ENCODE measurements at regions of chr1 and their contacts with region 1.

Region 1: DNA sequence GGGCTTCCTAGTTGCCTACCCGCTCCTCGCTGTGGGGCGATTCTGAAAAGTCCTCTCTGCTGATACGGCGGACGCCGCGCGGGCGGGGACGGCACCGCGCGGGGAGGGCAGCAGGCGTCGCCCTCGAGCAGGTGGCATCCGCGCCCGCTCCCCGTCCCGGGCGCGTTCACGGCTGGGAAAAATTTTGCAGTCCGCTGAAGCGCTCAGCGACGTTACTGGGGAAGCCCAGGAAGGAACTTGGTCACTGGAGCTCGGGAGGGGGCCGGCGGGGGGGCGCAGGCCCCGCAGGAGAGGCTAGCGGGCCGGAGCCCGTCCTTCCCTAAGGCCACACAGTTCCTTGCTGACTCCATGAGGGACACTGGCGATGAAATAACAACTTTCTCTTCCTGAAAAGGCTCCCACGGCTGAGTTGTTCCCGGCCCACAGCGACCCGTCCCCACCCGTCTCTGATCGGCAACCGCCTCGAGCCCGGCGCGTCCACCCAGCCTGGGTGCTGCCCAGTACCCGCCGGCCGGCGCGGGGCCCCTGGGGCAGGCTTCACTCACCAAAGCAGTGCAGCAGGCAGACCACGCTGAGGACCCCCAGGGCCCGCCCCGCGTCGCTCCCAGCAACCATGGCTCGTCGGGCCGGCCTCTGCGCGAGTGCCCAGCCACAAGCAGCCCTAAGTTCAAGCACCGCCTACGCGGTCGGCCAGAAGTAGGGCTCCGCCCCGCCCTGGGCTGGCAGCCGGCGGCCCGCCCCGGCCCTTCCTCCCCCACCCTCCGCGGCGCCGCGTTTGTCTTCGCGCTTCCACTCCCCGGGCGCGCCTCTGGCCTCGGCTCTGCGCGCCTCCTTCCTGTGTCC is at the start of gene CD58:
- DNase-seq: peak; percentile 86
- H3K4me3 Mint-ChIP-seq: peak within 1 kb of the TSS; percentile 69
- H3K27ac Mint-ChIP-seq: peak within 1 kb of the TSS; percentile 91
- H3K4me1 Mint-ChIP-seq: peaks cover 30% of the 10 kb centered on the region
- H3K27me3 Mint-ChIP-seq: no peaks in the 10 kb centered on the region
- CTCF ChIP-seq: peak; percentile 74
- total RNA-seq, gene CD58: 11.0 and 13.4 TPM in 2 replicates

Region 2: GRCh38 chr1:116133696-116134650 is 436.6 kb before region 1 on chr1:
- CTCF ChIA-PET with region 1: interaction called, 6 read pairs
- POLR2A ChIA-PET with region 1: no interaction called
- intact Hi-C with region 1: loop called (anchors 10 kb)
- DNase-seq: no peak
- H3K4me3 Mint-ChIP-seq: no peak overlapping the region
- H3K27ac Mint-ChIP-seq: no peak overlapping the region
- H3K4me1 Mint-ChIP-seq: no peaks in the 10 kb centered on the region
- H3K27me3 Mint-ChIP-seq: no peaks in the 10 kb centered on the region
- CTCF ChIP-seq: no peak

Region 3: GRCh38 chr1:116504308-116505156 is 66.0 kb before region 1 on chr1:
- CTCF ChIA-PET with region 1: interaction called, 4 read pairs
- POLR2A ChIA-PET with region 1: interaction called, 3 read pairs
- intact Hi-C with region 1: loop called (anchors 2 kb)
- DNase-seq: peak; percentile 62
- H3K4me3 Mint-ChIP-seq: no peak overlapping the region
- H3K27ac Mint-ChIP-seq: peak overlapping the region; percentile 73
- H3K4me1 Mint-ChIP-seq: peaks cover 27% of the 10 kb centered on the region
- H3K27me3 Mint-ChIP-seq: no peaks in the 10 kb centered on the region
- CTCF ChIP-seq: no peak

Region 4: DNA sequence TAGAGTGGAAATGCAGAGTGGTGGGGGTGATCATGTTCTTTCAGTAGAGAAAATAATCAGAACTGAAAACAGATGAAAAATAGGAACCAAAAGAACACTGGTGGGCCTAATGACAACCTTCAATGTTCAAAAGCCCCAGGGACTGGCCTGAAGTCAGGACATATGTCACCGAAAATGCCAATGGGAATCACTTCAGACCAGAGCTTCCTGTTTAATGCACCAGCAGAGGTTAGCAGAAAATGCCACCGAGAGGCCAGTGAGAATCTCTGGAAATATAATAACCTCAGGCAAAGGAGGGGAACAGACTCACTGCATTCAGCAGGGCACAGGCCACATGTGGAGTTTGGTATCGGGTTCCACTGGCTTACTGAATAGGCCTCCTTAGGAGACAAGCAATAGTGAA is 16.2 kb after region 1 on chr1:
- CTCF ChIA-PET with region 1: interaction called, 13 read pairs
- POLR2A ChIA-PET with region 1: no interaction called
- intact Hi-C with region 1: no loop called
- DNase-seq: no peak
- H3K4me3 Mint-ChIP-seq: no peak overlapping the region
- H3K27ac Mint-ChIP-seq: no peak overlapping the region
- H3K4me1 Mint-ChIP-seq: peaks cover 9% of the 10 kb centered on the region
- H3K27me3 Mint-ChIP-seq: no peaks in the 10 kb centered on the region
- CTCF ChIP-seq: no peak

Region 5: GRCh38 chr1:116737020-116737854 is 166.7 kb after region 1 on chr1:
- CTCF ChIA-PET with region 1: interaction called, 14 read pairs
- POLR2A ChIA-PET with region 1: no interaction called
- intact Hi-C with region 1: loop called (anchors 5 kb)
- DNase-seq: peak; percentile 60
- H3K4me3 Mint-ChIP-seq: no peak overlapping the region
- H3K27ac Mint-ChIP-seq: no peak overlapping the region
- H3K4me1 Mint-ChIP-seq: no peaks in the 10 kb centered on the region
- H3K27me3 Mint-ChIP-seq: peaks cover 11% of the 10 kb centered on the region
- CTCF ChIP-seq: peak; percentile 87

Region 6: DNA sequence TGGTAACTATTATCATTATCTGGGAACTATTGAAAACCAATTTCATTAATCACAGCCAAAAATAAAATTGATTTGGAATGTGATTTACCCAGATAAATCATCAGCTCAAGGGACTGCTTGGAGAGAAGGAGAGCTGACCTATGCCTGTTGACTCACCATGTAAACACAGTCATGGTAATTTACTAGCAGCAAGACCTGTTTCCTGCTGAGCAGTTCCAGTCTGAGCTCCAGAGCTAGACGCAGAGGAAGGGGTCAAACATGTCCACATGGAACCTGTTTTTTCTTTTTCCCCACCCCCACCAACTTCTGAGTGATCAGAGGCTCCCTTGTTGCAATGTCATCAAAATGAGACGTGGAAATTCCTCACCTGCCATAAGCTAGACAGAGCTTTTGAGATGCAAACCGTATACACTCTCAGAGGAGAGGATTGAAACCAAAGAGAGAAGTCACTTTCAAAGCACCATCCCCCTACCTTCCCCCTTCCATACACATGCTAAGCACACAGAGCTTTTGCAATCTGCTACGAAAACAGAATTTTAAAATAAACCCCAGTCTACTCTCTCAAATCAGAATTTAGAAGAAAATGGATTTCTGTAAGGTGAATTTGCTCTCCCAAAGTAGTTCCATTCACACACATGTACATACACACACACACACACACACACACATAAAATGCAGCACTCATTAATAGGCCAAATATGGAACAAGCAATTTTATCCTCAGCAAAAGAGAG is 283.3 kb after region 1 on chr1:
- CTCF ChIA-PET with region 1: interaction called, 3 read pairs
- POLR2A ChIA-PET with region 1: no interaction called
- intact Hi-C with region 1: loop called (anchors 10 kb)
- DNase-seq: peak; percentile 68
- H3K4me3 Mint-ChIP-seq: no peak overlapping the region
- H3K27ac Mint-ChIP-seq: peak overlapping the region; percentile 50
- H3K4me1 Mint-ChIP-seq: peaks cover 15% of the 10 kb centered on the region
- H3K27me3 Mint-ChIP-seq: no peaks in the 10 kb centered on the region
- CTCF ChIP-seq: no peak

Measured in MCF 10A (cell line).